Vagina (tissue), 2 donors: ENCODE measurements at regions of chr7 and their contacts with region 1.

Region 1: DNA sequence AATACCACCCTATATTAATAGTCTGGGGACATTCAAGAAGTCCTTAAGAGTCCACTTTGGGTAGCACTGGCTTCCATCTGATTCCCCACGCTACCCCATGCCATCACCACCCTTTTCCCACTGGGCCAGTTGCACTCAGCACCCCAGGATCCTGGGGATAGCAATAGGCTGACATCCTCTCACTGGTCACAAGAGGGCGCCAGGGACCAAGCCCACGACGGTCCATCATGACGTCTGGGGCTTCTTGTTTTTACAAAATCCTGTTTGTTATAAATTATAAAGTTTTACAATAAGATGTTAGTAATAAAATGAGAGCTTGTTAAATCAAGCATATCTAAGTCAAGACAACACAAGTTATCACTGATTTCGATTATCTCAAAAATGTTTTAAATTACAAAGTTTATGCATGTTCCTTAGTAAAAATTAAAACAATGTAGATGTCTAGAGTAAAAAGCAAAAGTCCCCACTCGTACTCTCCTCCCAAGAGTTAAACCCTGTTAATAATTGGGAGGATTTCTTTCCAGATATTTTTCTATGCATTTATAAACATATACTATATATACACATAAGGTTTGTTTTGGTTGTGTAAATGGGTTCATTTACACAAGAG is 15.4 kb downstream of the GPNMB start:
- DNase-seq: no peak
- H3K4me3 ChIP-seq: no peak overlapping the region
- H3K27ac ChIP-seq: no peak overlapping the region
- H3K4me1 ChIP-seq: no peaks in the 10 kb centered on the region
- H3K27me3 ChIP-seq: no peaks in the 10 kb centered on the region
- CTCF ChIP-seq: peak in 2 of 3 experiments; percentile 52 to 64
- POLR2A ChIP-seq: no peak

Region 2: GRCh38 chr7:23184709-23185359 is 77.1 kb before region 1 on chr7:
- intact Hi-C with region 1: loop called (anchors 5 kb)
- DNase-seq: no peak
- H3K4me3 ChIP-seq: no peak overlapping the region
- H3K27ac ChIP-seq: no peak overlapping the region
- H3K4me1 ChIP-seq: peaks cover 19% of the 10 kb centered on the region
- H3K27me3 ChIP-seq: no peaks in the 10 kb centered on the region
- CTCF ChIP-seq: peak in 2 of 3 experiments; percentile 24 to 51
- POLR2A ChIP-seq: no peak

Region 3: DNA sequence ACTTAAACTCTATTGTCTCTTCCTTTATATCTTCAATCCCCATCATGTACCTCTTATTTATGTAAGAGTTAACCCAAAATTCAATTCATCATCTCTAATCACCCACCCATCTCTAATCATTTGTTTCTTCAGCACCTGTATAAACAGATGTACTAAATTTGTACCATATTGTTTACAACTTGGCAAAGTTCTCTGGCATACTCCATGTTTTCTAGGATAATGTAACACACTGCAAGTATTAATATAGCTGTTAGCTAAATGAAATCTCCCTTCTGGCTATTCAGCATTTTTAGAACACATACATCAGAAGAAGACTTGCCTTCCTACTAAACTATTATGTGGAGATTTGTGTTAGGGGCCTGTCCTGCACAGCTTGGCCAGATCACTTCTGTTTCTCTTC is 70.2 kb after region 1 on chr7:
- intact Hi-C with region 1: no loop called
- DNase-seq: no peak
- H3K4me3 ChIP-seq: no peak overlapping the region
- H3K27ac ChIP-seq: no peak overlapping the region
- H3K4me1 ChIP-seq: peaks cover 26% of the 10 kb centered on the region
- H3K27me3 ChIP-seq: no peaks in the 10 kb centered on the region
- CTCF ChIP-seq: no peak
- POLR2A ChIP-seq: no peak